Colonic mucosa (tissue), 4 donors: ENCODE measurements at regions of chr18 and their contacts with region 1.

Region 1: DNA sequence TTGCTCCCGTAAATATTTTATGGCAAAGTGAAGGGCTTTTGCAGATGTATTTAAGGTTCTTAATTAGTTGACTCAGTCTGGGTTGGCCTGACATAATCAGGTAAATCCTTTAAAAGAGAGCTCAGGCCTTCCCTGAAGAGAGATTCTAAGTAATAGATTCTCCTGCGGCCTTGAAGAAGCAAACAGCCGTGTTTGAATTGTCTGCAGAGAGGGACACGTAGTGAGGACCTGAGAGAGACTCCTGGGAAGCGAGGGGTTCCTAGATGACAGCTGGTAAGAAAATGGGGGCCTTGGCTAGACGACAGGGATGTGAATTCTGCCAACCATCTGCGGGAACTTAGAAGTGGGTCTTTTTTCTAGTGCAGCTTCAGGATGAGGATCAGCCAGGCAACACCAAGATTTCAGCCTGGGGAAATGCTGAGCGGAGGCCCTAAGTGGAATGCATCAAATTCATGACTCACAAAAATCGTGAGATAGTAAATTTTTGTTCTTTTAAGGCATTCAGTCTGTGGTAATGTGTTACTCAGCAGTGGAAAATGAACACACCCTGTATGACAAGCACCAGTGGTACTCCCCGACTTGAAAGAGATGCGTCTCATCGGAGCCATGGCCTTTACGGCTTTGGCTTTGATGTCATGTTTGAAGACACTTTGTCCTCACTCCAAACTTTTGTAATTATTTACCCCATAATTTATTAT is 62.1 kb upstream of the SMIM21 start:
- DNase-seq: no peak
- H3K4me3 ChIP-seq: no peak overlapping the region
- H3K27ac ChIP-seq: no peak overlapping the region
- H3K4me1 ChIP-seq: no peaks in the 10 kb centered on the region
- H3K27me3 ChIP-seq: no peaks in the 10 kb centered on the region
- CTCF ChIP-seq: no peak

Region 2: GRCh38 chr18:75161256-75162028 is 328.2 kb before region 1 on chr18:
- intact Hi-C with region 1: loop called (anchors 10 kb)
- DNase-seq: peak; percentile 53
- H3K4me3 ChIP-seq: peak overlapping the region; percentile 53
- H3K27ac ChIP-seq: no peak overlapping the region
- H3K4me1 ChIP-seq: no peaks in the 10 kb centered on the region
- H3K27me3 ChIP-seq: no peaks in the 10 kb centered on the region
- CTCF ChIP-seq: peak; percentile 13